Right ventricle myocardium inferior (tissue), 1 donor: ENCODE measurements at regions of chr1 and their contacts with region 1.

Region 1: GRCh38 chr1:1059494-1060280 is 14.4 kb downstream of the RNF223 start:
- DNase-seq: peak; percentile 93
- ATAC-seq: peak; percentile 92

Region 2: GRCh38 chr1:983799-984473 is 75.8 kb before region 1 on chr1:
- intact Hi-C with region 1: loop called (anchors 2 kb)
- DNase-seq: peak; percentile 79
- ATAC-seq: no peak

Region 3: DNA sequence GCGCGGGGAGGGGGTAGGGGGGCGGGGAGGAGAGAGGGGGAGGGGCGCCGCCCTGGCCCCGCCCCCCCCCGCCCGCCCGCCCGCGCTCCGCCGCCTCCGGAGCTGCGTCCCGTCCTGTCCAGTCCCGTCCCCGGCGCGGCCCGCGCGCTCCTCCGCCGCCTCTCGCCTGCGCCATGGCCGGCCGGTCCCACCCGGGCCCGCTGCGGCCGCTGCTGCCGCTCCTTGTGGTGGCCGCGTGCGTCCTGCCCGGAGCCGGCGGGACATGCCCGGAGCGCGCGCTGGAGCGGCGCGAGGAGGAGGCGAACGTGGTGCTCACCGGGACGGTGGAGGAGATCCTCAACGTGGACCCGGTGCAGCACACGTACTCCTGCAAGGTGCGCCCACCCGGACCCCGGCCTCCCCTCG is 39.7 kb before region 1 on chr1 and contains the start of gene AGRN:
- intact Hi-C with region 1: loop called (anchors 5 kb)
- DNase-seq: peak; percentile 79
- ATAC-seq: peak; percentile 54
- total RNA-seq, gene AGRN: 14.1 TPM

Region 4: GRCh38 chr1:1091663-1092478 is 32.2 kb after region 1 on chr1:
- intact Hi-C with region 1: no loop called
- DNase-seq: no peak
- ATAC-seq: no peak